ENCODE measurements at regions of chr17 and their contacts with region 1.

Region 1: DNA sequence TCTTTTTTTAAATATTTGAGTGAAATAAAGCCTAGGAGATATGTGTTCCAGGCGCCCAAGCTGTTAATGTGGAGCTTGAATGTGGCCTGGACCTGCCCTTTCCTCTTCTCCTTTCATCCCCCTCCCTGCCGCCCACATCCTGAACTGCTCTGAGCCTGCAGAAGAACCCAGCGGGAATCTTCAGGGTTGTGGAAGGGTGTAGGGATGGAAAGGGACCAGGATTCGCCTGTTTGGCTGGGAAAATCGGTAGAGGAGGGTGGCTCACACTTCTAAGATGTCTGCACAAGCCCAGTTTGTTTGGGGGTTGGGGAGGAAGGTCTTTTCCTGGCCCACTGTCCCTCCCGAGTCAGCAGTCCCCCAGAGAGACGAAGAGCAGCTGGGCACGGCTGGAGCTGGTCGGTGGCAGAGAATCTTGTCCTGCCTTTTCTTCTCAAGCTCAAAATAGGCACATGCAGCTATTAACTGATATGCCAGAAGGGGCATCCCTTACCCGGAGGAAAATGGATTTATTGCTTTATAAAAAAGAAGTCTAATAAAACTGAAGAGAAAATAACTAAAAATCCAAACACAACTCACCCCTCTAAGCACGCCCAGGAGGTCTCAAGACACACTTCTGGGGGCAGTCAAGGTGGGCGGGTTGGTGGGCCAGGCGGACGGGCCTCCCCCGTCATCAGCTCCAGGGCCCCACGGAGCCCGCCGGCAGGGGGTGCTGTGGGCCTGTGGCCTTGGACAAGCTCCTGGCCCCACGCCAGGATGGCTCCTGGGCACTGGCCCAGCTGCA is 11.5 kb upstream of the PITPNA start:
- DNase-seq: peak in 1 of 2 donors; percentile 96
- H3K4me3 ChIP-seq: no peak overlapping the region
- CTCF ChIP-seq: peak in 1 of 3 donors; percentile 95
- POLR2A ChIP-seq: no peak

Region 2: DNA sequence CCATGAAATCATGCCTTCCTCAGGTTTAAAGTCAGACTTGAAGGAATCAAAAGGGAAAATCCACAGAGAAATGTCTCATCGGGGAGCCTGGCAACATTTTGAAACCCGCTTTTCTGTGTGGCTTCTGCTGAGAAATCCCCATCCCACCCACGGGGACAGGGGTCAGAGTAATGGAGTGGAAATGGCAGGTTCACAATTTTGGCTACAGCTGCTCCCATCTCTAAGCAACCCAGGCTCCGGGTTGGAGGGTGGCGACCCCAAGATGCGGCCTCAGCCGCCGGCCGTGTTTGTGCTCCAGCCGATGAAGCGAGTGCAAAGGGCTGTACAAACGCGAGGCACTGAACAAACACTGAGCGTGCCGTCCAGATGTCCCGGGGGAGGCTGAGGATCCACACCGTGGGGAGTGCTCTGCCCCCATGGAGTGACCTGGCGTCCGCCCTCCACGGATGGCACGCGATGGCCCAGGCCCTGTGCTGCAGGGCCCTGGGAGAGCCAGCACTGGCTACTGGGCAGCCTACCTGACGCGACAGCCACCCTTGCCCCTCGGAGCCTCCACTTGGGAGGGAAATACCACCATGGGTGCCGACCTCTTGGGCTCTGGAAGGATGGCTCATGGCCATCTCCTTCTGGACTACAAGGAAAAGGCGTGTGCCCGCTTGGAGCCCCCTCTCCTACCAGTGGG is 32.4 kb after region 1 on chr17:
- intact Hi-C with region 1: no loop called
- DNase-seq: no peak
- H3K4me3 ChIP-seq: no peak overlapping the region
- CTCF ChIP-seq: no peak
- POLR2A ChIP-seq: no peak

Region 3: GRCh38 chr17:1648963-1649843 is 75.1 kb after region 1 on chr17:
- intact Hi-C with region 1: loop called (anchors 10 kb)
- DNase-seq: peak; percentile 91 to 98
- H3K4me3 ChIP-seq: peak overlapping the region; percentile 42
- CTCF ChIP-seq: no peak
- POLR2A ChIP-seq: no peak